ENCODE measurements at regions of chr9 and their contacts with region 1.

Region 1: GRCh38 chr9:132885718-132886333 is 7.1 kb downstream of the SPACA9 start:
- DNase-seq: peak; percentile 66 to 71
- H3K4me3 ChIP-seq: no peak overlapping the region
- H3K4me3 Mint-ChIP-seq: no peak overlapping the region
- H3K27ac Mint-ChIP-seq: peak overlapping the region; percentile 39
- H3K4me1 ChIP-seq: peaks cover 8% of the 10 kb centered on the region; the same call in 1 of the 2 replicates
- H3K4me1 Mint-ChIP-seq: no peaks in the 10 kb centered on the region
- H3K27me3 ChIP-seq: no peaks in the 10 kb centered on the region
- H3K27me3 Mint-ChIP-seq: no peaks in the 10 kb centered on the region
- CTCF ChIP-seq: no peak

Region 2: DNA sequence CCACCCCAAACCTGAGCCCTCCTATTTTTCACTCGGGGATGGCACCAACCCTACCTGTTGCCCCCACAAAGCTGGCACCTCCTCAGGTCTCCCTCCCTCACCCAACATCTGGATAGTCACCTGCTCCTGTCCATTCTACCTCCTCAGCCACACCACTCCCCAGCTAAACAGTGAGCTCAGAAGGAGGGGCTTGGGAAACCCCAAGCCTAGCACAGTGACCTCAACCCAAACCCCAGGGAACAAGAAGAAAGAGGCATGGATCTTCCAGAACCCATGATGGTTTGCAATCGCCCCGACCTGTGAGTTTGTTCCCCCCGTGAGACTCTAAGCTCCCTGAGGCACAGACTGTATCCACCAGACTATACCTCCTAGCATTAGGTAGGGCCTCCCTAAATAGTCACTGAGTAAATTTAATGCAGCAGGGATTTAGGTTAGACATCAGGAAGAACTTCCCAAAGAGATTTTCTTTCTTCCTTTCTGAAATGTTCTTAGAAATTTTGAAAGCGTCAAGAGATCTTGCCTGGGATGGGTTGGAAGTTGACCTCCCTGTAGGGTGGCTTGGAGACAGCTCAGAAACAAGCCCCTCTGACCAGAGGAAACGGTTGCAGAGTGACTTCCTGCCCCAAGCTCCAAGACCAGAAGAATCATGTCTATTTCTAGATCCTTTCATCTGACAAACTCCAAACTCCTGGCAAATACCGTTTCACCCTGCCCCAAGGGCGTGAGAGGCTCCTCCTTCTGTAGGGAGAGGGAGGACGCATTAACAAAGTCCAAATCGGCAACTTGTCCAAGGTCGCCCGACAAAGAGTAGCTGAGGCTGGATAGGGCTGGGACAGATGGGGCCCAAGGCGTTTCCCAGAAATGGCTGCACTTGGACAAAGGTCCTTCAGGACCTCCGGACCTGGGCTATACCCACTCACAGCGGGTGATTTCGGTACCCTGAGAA is 1950.9 kb before region 1 on chr9:
- CTCF ChIA-PET with region 1: interaction called, 10 read pairs
- POLR2A ChIA-PET with region 1: no interaction called
- intact Hi-C with region 1: no loop called
- DNase-seq: peak in 1 of 2 experiments; percentile 56
- H3K4me3 ChIP-seq: no peak overlapping the region
- H3K4me3 Mint-ChIP-seq: no peak overlapping the region
- H3K27ac Mint-ChIP-seq: no peak overlapping the region
- H3K4me1 ChIP-seq: peaks cover 23% of the 10 kb centered on the region
- H3K4me1 Mint-ChIP-seq: peaks cover 14% of the 10 kb centered on the region
- H3K27me3 ChIP-seq: peaks cover 1% of the 10 kb centered on the region; the same call in 1 of the 2 replicates
- H3K27me3 Mint-ChIP-seq: peaks cover 26% of the 10 kb centered on the region
- CTCF ChIP-seq: no peak

Measured in Caco-2 (cell line).